ENCODE measurements at regions of chr1 and their contacts with region 1.

Region 1: GRCh38 chr1:235990376-235991085 is 74.4 kb downstream of the NID1 start:
- DNase-seq: no peak
- H3K4me3 ChIP-seq: no peak overlapping the region
- CTCF ChIP-seq: no peak

Region 2: GRCh38 chr1:236064674-236065508 is 74.4 kb after region 1 on chr1 and contains the start of gene NID1:
- in situ Hi-C with region 1: loop called (anchors 5 kb)
- DNase-seq: peak; percentile 27
- H3K4me3 ChIP-seq: peak within 1 kb of the TSS; percentile 83
- CTCF ChIP-seq: peak; percentile 25

Measured in astrocyte of the cerebellum (primary cell).